GM13977 (cell line): ENCODE measurements at regions of chr10 and their contacts with region 1.

Region 1: GRCh38 chr10:21464143-21464533 is 61.3 kb downstream of the SKIDA1 start:
- DNase-seq: no peak
- CTCF ChIP-seq: no peak

Region 2: DNA sequence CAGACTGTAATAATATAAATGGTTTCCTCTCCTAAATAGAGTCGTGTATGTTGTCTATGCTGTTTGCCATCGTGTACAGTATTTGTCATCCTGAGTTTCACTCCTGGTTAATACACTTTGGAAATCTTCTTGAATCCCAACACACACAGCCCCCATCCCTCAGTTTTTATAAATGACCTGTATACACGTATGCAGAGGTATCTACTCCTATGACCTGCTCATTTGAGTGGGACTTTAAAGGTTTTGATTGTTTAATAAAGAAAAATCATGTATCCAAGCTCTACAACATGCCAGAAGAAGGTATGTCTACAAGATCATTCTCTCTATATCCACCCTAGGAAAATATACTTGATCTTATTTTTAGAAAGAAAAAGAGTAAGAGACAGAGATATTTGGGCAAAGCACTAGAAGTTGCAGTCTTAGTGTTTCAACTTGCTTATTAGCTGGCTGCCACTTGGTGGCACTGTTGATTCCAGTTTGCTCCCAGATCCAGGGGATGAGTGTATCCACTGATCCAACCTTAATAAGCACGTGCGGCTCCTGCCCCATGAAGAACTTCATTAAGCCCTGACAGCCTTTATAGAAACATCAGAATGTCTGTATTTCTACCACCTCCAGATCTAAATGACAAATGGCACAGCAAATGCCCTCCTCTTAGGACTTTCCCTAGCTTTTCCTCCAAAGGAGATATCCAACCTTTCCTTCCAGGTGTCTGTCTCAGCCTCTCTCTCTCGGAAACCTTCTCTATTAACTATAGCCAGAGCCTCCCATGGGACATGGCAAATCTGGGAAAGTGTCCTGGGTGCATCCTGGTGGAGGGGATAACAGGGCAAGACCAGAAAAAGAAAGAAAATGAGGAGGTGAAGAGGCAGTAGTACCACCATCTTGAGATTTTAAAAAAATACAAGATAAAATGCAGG is 385.5 kb before region 1 on chr10:
- in situ Hi-C with region 1: loop called (anchors 25 kb)
- DNase-seq: peak; percentile 21
- CTCF ChIP-seq: peak; percentile 79

Region 3: DNA sequence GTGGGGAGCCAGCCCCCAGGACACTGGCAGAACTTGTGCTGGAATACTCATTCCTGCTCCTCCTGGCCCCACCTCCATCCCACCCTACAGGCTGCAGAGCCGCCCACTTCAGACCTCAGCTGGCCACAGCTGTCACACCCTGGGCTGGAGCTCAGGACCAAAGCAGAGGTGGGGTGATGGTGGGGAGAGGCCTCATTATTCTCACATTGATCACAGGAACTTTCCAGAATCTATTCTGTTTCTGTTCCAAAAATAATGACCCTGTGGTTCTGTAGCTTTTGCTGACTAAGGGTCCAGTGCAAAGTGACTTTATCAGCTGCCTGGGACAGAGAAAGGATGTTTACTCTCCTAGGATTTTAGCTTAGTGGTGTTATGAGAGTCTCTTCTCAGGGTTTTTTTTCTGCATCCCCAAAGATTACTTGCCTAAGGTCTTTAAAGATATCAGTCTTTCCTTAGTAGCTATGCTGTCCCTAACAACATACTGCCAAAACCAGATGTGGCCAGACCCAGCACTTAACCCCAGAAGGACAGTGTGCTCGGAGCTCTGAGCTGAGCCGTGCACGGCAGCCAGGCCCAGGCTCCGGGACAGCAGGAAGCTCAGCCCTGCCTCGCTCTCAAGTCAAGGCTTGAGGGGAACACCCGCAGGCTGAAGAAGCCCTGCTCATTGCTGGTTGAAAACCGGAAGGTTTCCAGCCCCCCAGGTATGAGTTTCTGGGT is 293.2 kb after region 1 on chr10:
- in situ Hi-C with region 1: no loop called
- DNase-seq: no peak
- CTCF ChIP-seq: no peak